HepG2 (cell line): ENCODE measurements at regions of chr1 and their contacts with region 1.

Region 1: DNA sequence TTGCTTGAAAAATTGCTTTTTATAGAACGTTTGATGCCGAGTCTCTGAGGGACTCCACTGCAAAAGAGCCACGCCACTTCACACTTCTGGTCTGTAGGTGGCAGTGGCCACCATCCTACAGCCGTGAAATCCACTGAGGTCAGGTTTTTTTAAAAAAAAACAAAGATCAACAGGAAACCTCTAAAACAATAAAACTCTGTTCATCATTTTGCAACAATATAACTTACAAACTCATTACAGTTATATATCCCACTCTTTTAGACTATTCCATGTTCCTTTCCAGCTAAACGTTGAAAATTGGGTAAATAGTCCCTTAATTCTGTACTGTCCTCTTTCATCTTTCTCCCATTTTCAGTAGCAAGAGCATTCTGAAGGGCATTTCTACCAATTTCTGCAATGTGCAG is 64.6 kb upstream of the FMN2 start:
- DNase-seq: peak; percentile 9
- ATAC-seq: peak; percentile 91
- H3K4me3 ChIP-seq: no peak overlapping the region
- H3K27ac ChIP-seq: no peak overlapping the region
- H3K4me1 ChIP-seq: no peaks in the 10 kb centered on the region
- H3K27me3 ChIP-seq: no peaks in the 10 kb centered on the region; a peak in 1 of 5 replicates
- CTCF ChIP-seq: peak; percentile 74
- EP300 ChIP-seq: no peak
- POLR2A ChIP-seq: no peak
- RAD21 ChIP-seq: peak; percentile 49

Region 2: DNA sequence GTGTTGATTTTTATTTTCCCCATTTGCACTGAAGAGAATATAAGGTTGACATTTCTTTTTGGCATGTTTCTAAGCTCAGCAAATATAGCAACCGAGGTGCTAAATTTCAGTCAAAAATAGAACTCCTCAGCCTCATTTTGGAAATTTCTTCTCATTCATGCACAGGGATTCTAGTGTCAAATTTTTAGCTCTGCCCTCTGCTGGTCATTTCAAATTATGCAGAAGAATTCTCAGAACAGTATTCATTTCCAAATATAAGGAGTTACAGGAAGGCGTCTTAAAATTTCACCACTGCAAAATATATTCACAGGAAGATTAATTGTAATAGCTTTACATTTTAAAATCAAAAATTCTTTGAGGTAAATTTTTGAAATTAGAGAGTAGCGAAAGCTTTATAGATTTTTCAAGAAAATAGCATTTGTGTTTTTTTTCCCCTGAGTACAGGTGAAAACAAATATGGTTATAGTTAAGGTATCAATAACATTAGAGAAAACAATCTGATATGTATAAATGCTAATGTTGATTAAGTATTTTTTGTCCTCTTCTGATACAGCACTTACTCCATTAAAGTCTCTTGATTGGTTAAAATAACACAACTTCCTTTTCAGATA is 122.5 kb after region 1 on chr1:
- CTCF ChIA-PET with region 1: interaction called, 16 read pairs
- POLR2A ChIA-PET with region 1: no interaction called
- in situ Hi-C with region 1: loop called (anchors 5 kb)
- intact Hi-C with region 1: no loop called
- DNase-seq: peak; percentile 17
- ATAC-seq: no peak
- H3K4me3 ChIP-seq: no peak overlapping the region
- H3K27ac ChIP-seq: no peak overlapping the region
- H3K4me1 ChIP-seq: no peaks in the 10 kb centered on the region
- H3K27me3 ChIP-seq: no peaks in the 10 kb centered on the region; a peak in 1 of 5 replicates
- CTCF ChIP-seq: peak; percentile 48
- EP300 ChIP-seq: no peak
- POLR2A ChIP-seq: no peak
- RAD21 ChIP-seq: no peak